ENCODE measurements at regions of chr2 and their contacts with region 1.

Region 1: DNA sequence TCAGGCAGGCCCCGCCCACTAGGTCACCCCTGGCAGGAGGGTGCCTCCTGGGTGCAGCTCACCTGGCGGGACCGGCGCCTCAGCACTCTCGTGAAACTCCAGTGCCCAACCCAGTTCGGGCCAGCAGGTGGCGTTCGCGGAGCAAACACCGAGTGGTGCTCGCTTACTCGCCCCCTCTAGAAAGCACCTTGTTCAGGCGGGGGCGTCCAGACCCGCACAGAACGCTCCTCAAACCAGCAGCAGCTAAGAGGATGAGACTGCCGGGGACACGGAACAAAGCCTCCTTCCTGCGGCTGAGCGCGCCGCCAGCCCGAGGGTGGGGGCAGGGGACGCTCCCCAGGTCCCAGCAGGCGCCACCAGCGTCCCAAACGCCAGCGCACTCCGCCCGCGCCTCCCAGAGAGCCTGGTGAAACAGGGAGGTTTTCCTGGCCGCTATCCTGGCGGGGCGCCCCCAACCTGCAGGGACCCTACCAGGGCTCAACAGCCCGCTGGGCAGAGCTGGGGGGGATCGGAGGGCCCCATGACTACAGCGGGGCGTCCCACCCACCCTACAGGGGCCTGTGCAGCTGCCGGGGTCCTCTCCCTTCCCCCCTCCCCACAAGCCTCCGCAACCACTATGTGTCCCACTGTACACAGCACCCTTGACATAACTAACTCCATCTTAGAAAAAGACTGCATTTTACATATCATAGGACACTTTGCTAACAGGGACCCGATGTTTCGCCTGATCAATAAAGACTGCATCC is 44.7 kb downstream of the MRPS5 start:
- DNase-seq: peak; percentile 57 to 94
- ATAC-seq: peak; percentile 75 to 93 (median 91)
- H3K4me3 ChIP-seq: peak overlapping the region; percentile 23
- H3K4me3 Mint-ChIP-seq: peak overlapping the region; percentile 49
- H3K27ac ChIP-seq: no peak overlapping the region
- H3K27ac Mint-ChIP-seq: no peak overlapping the region
- H3K4me1 ChIP-seq: peaks cover 43% of the 10 kb centered on the region
- H3K4me1 Mint-ChIP-seq: peaks cover 5 to 6% of the 10 kb centered on the region in 2 donors
- H3K27me3 ChIP-seq: no peaks in the 10 kb centered on the region
- H3K27me3 Mint-ChIP-seq: peaks cover 12 to 14% of the 10 kb centered on the region in 2 donors
- CTCF ChIP-seq: peak; percentile 75

Region 2: DNA sequence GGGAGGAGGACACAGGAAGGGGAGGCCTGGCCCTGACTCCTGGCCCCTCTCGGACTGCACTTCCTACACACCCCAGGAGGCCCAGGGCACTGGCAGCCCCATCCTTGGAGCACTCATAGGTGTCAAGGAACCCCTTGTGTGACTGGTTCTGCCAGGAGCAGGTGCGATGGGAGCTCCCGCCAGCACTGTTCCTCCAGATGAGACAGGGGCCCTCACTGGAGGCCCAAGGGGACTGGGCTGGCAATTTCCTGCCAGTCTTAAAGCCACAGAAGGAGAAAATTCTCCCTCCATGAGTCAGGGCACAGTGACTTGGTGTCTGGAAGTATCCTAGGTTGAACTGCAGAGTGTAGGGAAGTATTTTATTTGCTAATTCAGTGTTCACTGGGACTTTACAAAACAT is 94.3 kb before region 1 on chr2:
- intact Hi-C with region 1: no loop called
- DNase-seq: no peak
- ATAC-seq: no peak
- H3K4me3 ChIP-seq: no peak overlapping the region
- H3K4me3 Mint-ChIP-seq: no peak overlapping the region
- H3K27ac ChIP-seq: no peak overlapping the region
- H3K27ac Mint-ChIP-seq: no peak overlapping the region
- H3K4me1 ChIP-seq: no peaks in the 10 kb centered on the region
- H3K4me1 Mint-ChIP-seq: no peaks in the 10 kb centered on the region
- H3K27me3 ChIP-seq: no peaks in the 10 kb centered on the region
- H3K27me3 Mint-ChIP-seq: peaks cover 4 to 5% of the 10 kb centered on the region in 2 donors
- CTCF ChIP-seq: no peak

Region 3: GRCh38 chr2:95062242-95063085 is 14.5 kb before region 1 on chr2:
- intact Hi-C with region 1: no loop called
- DNase-seq: no peak
- ATAC-seq: no peak
- H3K4me3 ChIP-seq: no peak overlapping the region
- H3K4me3 Mint-ChIP-seq: no peak overlapping the region
- H3K27ac ChIP-seq: no peak overlapping the region
- H3K27ac Mint-ChIP-seq: no peak overlapping the region
- H3K4me1 ChIP-seq: no peaks in the 10 kb centered on the region
- H3K4me1 Mint-ChIP-seq: no peaks in the 10 kb centered on the region
- H3K27me3 ChIP-seq: no peaks in the 10 kb centered on the region
- H3K27me3 Mint-ChIP-seq: peaks cover 0 to 6% of the 10 kb centered on the region in 2 donors
- CTCF ChIP-seq: no peak

Region 4: GRCh38 chr2:95115418-95115817 is 38.5 kb after region 1 on chr2:
- intact Hi-C with region 1: loop called (anchors 1 kb)
- DNase-seq: peak; percentile 41 to 85
- ATAC-seq: peak; percentile 91 to 99 (median 97)
- H3K4me3 ChIP-seq: no peak overlapping the region
- H3K4me3 Mint-ChIP-seq: no peak overlapping the region
- H3K27ac ChIP-seq: no peak overlapping the region
- H3K27ac Mint-ChIP-seq: no peak overlapping the region
- H3K4me1 ChIP-seq: peaks cover 9% of the 10 kb centered on the region
- H3K4me1 Mint-ChIP-seq: peaks cover 34 to 38% of the 10 kb centered on the region in 2 donors
- H3K27me3 ChIP-seq: no peaks in the 10 kb centered on the region
- H3K27me3 Mint-ChIP-seq: no peaks in the 10 kb centered on the region
- CTCF ChIP-seq: peak; percentile 66

Region 5: DNA sequence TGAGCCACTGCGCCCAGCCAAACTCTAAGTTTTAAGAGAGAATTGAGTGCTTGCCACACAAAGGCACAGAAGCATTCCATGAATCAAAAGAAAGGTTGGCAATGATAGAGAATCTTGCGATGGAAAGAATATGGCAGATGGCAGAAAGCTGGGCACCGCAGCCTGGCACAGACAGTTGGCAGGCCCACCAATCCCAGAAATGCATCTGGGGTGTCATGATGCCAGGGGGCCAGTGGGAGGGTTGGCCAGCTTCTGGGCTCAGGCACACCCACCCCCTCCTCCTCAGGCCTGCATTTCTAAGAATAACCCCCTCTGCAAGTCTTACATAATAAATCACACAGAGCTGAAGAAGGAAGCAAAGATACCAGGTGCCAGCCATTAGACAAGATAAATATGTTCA is 108.2 kb after region 1 on chr2:
- intact Hi-C with region 1: no loop called
- DNase-seq: no peak
- ATAC-seq: no peak
- H3K4me3 ChIP-seq: no peak overlapping the region
- H3K4me3 Mint-ChIP-seq: no peak overlapping the region
- H3K27ac ChIP-seq: no peak overlapping the region
- H3K27ac Mint-ChIP-seq: no peak overlapping the region
- H3K4me1 ChIP-seq: no peaks in the 10 kb centered on the region
- H3K4me1 Mint-ChIP-seq: no peaks in the 10 kb centered on the region
- H3K27me3 ChIP-seq: no peaks in the 10 kb centered on the region
- H3K27me3 Mint-ChIP-seq: peaks cover 6 to 7% of the 10 kb centered on the region in 2 donors
- CTCF ChIP-seq: no peak